ENCODE measurements at regions of chr10 and their contacts with region 1.

Region 1: GRCh38 chr10:15168781-15169554 is 475 bp upstream of the NMT2 start:
- DNase-seq: peak; percentile 85 to 98 (median 95)
- ATAC-seq: peak; percentile 68 to 88 (median 74)
- H3K4me3 ChIP-seq: peak overlapping the region; percentile 44 to 64
- H3K4me3 Mint-ChIP-seq: peak overlapping the region; percentile 80 to 93 (median 81)
- H3K27ac ChIP-seq: peak overlapping the region; percentile 75
- H3K27ac Mint-ChIP-seq: peak overlapping the region; percentile 88 to 93
- H3K4me1 ChIP-seq: peaks cover 40 to 43% of the 10 kb centered on the region in 2 experiments
- H3K4me1 Mint-ChIP-seq: peaks cover 67 to 77% (median 70%) of the 10 kb centered on the region in 3 donors
- H3K27me3 ChIP-seq: no peaks in the 10 kb centered on the region
- H3K27me3 Mint-ChIP-seq: no peaks in the 10 kb centered on the region

Region 2: DNA sequence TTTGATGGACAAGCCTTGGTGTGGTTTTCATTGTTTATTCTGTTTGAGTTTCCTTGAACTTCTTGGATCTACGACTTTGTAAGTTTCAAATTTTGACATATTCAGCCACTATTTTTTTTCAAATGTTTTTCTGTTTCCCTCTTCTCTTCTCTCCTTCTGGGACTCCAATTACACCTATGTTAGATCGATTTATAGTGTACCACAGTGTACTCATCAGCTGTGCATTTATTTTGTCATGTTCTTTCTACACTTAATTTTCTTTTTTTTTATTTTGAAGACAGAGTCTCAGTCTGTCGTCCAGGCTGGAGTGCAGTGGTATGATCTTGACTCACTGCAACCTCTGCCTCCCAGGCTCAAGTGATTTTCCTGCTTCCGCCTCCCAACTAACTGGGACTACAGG is 109.1 kb before region 1 on chr10:
- CTCF ChIA-PET with region 1: no interaction called
- POLR2A ChIA-PET with region 1: no interaction called
- DNase-seq: no peak
- ATAC-seq: no peak
- H3K4me3 ChIP-seq: no peak overlapping the region
- H3K4me3 Mint-ChIP-seq: no peak overlapping the region
- H3K27ac ChIP-seq: no peak overlapping the region
- H3K27ac Mint-ChIP-seq: no peak overlapping the region
- H3K4me1 ChIP-seq: no peaks in the 10 kb centered on the region
- H3K4me1 Mint-ChIP-seq: no peaks in the 10 kb centered on the region
- H3K27me3 ChIP-seq: peaks cover 0 to 18% of the 10 kb centered on the region in 2 experiments
- H3K27me3 Mint-ChIP-seq: peaks cover 12 to 17% of the 10 kb centered on the region in 2 donors

Region 3: DNA sequence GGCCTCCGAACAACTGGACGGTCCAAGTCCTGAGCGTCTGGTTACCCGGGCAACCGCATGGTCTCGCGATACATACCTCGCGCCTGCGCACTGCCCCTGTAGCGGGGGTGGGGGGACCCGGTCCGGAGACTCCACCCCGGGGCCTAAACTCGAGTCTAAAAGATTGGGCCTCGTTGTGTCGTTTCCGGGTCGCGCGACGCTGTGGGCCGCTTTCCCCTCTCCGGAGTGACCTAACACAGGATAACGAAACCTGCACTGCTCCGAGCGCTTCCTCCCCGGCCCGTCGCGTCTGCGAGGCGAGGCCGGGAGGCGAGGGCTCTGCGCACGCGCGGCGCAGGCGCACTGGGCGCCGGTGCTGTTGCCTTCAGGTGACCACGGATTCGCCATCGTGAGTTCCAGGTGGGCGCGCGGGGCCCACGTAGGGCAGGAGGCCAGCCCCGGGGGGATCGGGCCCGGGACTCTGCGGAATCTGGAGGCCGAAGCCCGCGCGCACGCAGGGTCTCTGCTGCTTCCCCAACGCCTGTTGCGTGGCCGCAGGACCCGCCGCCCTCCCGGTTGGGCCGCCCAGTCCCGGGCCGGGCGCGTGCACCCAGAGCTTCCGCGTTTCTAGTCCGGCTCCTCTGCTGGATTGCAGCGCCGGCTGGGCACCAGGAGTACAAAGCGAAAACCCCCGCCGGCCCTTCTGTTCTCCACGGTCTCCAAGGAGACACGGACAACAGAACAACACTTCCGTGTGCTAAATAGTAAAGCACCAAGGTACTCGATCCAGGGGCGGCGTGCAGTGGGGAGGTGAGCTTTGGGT is 71.8 kb before region 1 on chr10 and contains the start of gene RPP38:
- CTCF ChIA-PET with region 1: interaction called in 1 of 2 experiments, 6 read pairs
- POLR2A ChIA-PET with region 1: interaction called in 1 of 2 experiments, 11 read pairs
- DNase-seq: peak; percentile 82 to 96 (median 90)
- ATAC-seq: peak; percentile 84 to 87 (median 86)
- H3K4me3 ChIP-seq: peak within 1 kb of the TSS; percentile 73 to 84
- H3K4me3 Mint-ChIP-seq: peak within 1 kb of the TSS; percentile 93 to 99 (median 95)
- H3K27ac ChIP-seq: peak within 1 kb of the TSS; percentile 91
- H3K27ac Mint-ChIP-seq: peak within 1 kb of the TSS; percentile 93 to 96
- H3K4me1 ChIP-seq: peaks cover 3 to 33% of the 10 kb centered on the region in 2 experiments
- H3K4me1 Mint-ChIP-seq: peaks cover 37 to 45% (median 43%) of the 10 kb centered on the region in 3 donors
- H3K27me3 ChIP-seq: no peaks in the 10 kb centered on the region
- H3K27me3 Mint-ChIP-seq: no peaks in the 10 kb centered on the region
- total RNA-seq, gene RPP38: 8.2 to 21.0 (median 16.6) TPM

Region 4: DNA sequence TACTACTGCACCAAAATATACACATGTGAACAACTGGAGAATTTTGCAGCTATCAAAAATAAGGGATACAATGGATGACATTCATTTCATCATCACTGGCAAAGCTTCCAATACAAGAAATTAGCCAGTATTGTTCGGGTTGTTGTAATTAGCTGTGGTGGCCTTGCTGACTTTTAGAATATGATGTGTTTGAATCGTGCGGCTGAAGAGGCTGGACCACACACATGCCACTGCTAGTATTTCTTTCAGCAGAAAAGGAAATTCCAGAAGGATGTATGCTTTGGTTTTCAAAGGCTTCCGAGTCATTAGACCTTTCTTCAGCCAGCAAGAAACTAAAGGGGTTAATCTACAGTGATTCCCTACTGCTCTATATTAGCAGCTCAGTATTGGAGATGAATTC is 55.2 kb before region 1 on chr10:
- CTCF ChIA-PET with region 1: interaction called in 1 of 2 experiments, 10 read pairs
- POLR2A ChIA-PET with region 1: no interaction called
- DNase-seq: no peak
- ATAC-seq: no peak
- H3K4me3 ChIP-seq: no peak overlapping the region
- H3K4me3 Mint-ChIP-seq: no peak overlapping the region
- H3K27ac ChIP-seq: no peak overlapping the region
- H3K27ac Mint-ChIP-seq: no peak overlapping the region
- H3K4me1 ChIP-seq: no peaks in the 10 kb centered on the region
- H3K4me1 Mint-ChIP-seq: peaks cover 0 to 7% (median 4%) of the 10 kb centered on the region in 3 donors
- H3K27me3 ChIP-seq: no peaks in the 10 kb centered on the region
- H3K27me3 Mint-ChIP-seq: no peaks in the 10 kb centered on the region

Region 5: DNA sequence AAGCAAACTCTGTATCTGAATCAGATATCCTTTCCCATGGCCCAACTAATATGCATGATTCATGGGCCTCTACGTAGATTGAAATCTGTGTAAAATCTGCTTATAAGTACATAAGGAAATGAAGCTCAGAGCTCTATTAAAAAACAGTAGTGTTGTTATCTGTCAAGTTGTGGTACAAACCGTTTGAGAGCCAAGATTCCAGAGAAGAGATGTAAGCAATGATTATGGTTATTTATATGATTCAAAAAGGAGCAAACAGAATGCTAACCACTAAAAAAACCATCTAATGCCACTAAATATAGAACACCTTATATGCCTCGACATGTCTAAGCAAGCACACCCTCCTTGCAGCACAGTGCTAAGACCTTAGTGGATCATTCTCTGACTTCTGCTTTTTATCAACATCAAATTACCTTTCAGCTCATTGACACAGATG is 45.2 kb before region 1 on chr10:
- CTCF ChIA-PET with region 1: no interaction called
- POLR2A ChIA-PET with region 1: no interaction called
- DNase-seq: no peak
- ATAC-seq: peak in 2 of 4 experiments; percentile 43
- H3K4me3 ChIP-seq: no peak overlapping the region
- H3K4me3 Mint-ChIP-seq: no peak overlapping the region
- H3K27ac ChIP-seq: no peak overlapping the region
- H3K27ac Mint-ChIP-seq: peak overlapping the region; percentile 37 to 46
- H3K4me1 ChIP-seq: no peaks in the 10 kb centered on the region
- H3K4me1 Mint-ChIP-seq: peaks cover 6 to 16% (median 6%) of the 10 kb centered on the region in 3 donors
- H3K27me3 ChIP-seq: no peaks in the 10 kb centered on the region
- H3K27me3 Mint-ChIP-seq: no peaks in the 10 kb centered on the region

Region 6: DNA sequence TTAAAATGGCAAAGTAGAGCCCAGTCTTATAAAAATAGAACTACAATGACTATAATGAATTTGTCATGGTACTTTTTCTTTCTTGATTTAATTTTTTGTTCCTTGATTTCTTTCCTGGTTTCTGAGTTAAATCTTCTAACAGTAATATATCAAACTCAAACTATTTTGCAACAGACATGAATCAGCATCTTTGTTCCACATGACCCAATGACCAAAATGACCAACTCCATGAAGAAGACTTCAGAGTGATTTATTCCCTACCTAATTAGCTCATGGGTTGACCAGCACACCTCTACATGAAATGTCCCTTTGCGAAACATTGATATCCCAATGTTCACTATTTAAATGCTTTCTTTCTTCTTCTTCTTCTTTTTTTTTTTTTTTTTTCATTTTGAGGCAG is 31.3 kb before region 1 on chr10:
- CTCF ChIA-PET with region 1: interaction called in 1 of 2 experiments, 4 read pairs
- POLR2A ChIA-PET with region 1: interaction called in 1 of 2 experiments, 19 read pairs
- DNase-seq: no peak
- ATAC-seq: no peak
- H3K4me3 ChIP-seq: no peak overlapping the region
- H3K4me3 Mint-ChIP-seq: no peak overlapping the region
- H3K27ac ChIP-seq: no peak overlapping the region
- H3K27ac Mint-ChIP-seq: peak overlapping the region in 1 of 2 donors; percentile 16
- H3K4me1 ChIP-seq: peaks cover 4 to 13% of the 10 kb centered on the region in 2 experiments
- H3K4me1 Mint-ChIP-seq: peaks cover 24 to 37% (median 28%) of the 10 kb centered on the region in 3 donors
- H3K27me3 ChIP-seq: no peaks in the 10 kb centered on the region
- H3K27me3 Mint-ChIP-seq: no peaks in the 10 kb centered on the region

Region 7: DNA sequence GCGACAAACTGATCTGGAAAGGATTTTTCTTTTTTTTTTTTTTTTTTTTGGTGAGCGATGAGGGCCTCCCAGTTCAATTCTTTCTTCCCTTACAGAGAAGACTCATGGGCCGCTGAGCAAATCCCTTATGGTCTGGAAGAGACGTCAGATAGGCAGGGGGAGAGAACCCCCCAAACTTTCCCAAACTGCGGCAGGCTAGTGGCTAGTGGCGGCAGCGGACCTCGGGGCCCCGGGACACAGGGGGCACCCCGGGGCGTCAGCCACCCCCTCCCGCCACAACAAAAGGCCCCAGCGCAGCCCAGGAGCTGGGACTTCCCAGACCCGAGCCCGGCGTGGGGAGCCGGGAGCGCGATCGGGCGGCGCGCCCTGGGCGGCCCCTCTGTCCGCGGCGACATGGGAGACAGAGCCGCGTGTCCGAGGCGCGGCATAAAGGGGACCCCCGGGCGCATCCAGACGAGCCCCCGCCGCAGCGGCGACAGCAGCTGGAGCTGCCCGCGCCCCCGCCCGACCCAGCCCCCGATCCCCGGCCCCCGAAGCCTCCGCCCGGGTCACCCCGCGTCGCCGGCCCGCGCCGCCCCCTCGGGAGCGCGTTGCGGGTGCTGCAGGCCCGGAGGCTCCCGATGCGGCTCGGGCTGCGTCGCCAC is 201.4 kb after region 1 on chr10:
- CTCF ChIA-PET with region 1: no interaction called
- POLR2A ChIA-PET with region 1: no interaction called
- DNase-seq: peak in 6 of 35 experiments; percentile 1 to 46 (median 5)
- ATAC-seq: peak in 3 of 4 experiments; percentile 26 to 51 (median 44)
- H3K4me3 ChIP-seq: peak overlapping the region; percentile 33 to 51
- H3K4me3 Mint-ChIP-seq: peak overlapping the region; percentile 73 to 81 (median 78)
- H3K27ac ChIP-seq: no peak overlapping the region
- H3K27ac Mint-ChIP-seq: no peak overlapping the region
- H3K4me1 ChIP-seq: peaks cover 0 to 14% of the 10 kb centered on the region in 2 experiments
- H3K4me1 Mint-ChIP-seq: peaks cover 0 to 14% (median 9%) of the 10 kb centered on the region in 3 donors
- H3K27me3 ChIP-seq: peaks cover 11 to 24% of the 10 kb centered on the region in 2 experiments
- H3K27me3 Mint-ChIP-seq: peaks cover 3 to 17% of the 10 kb centered on the region in 2 donors

Measured in T-cell (primary cell).